ENCODE measurements at regions of chr22 and their contacts with region 1.

Region 1: GRCh38 chr22:20550821-20551744 is 43.7 kb downstream of the MED15 start:
- DNase-seq: peak in 2 of 3 donors; percentile 52 to 69
- H3K4me3 ChIP-seq: peak overlapping the region in 1 of 7 experiments; percentile 3
- H3K27ac ChIP-seq: no peak overlapping the region
- H3K4me1 ChIP-seq: peaks cover 9 to 35% (median 27%) of the 10 kb centered on the region in 4 experiments
- H3K27me3 ChIP-seq: no peaks in the 10 kb centered on the region

Region 2: DNA sequence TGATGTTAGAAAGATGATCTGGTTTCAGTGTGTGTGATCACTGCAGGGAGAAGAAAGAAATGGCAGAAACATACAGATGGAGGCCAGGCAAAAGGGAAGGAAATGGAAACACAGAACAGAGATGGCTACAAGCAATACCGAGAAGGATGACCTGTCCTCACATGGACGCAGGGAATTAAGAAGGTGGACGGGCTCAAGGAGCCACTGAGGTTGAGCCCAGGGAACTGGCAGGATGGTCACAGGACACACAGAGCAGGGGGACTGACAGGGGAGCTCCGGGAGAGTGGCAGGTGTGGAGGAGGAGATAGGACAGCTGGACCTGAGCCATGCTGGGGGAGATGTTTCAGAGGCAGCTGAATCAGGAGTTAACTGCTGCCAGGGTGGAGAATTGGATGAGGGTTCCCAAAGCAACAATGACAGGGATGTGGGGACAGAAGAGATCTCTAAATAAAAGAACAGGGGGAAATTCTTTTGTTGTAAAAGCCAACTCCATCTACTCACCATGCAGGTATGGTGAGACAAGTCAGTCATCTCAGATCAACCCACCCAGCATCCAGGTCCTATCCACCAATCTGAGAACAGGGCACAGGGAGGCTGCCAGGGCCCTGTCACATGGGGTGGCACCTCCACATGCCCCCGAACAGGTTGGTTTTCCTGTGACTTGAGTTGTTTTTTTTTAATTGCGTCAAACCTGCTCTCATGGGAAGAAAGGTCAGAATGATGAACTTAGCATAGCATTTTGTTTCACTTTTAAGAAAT is 81.8 kb before region 1 on chr22:
- CTCF ChIA-PET with region 1: no interaction called
- POLR2A ChIA-PET with region 1: no interaction called
- DNase-seq: no peak
- H3K4me3 ChIP-seq: no peak overlapping the region
- H3K27ac ChIP-seq: no peak overlapping the region
- H3K4me1 ChIP-seq: peaks cover 0 to 2% (median 2%) of the 10 kb centered on the region in 4 experiments
- H3K27me3 ChIP-seq: no peaks in the 10 kb centered on the region

Region 3: DNA sequence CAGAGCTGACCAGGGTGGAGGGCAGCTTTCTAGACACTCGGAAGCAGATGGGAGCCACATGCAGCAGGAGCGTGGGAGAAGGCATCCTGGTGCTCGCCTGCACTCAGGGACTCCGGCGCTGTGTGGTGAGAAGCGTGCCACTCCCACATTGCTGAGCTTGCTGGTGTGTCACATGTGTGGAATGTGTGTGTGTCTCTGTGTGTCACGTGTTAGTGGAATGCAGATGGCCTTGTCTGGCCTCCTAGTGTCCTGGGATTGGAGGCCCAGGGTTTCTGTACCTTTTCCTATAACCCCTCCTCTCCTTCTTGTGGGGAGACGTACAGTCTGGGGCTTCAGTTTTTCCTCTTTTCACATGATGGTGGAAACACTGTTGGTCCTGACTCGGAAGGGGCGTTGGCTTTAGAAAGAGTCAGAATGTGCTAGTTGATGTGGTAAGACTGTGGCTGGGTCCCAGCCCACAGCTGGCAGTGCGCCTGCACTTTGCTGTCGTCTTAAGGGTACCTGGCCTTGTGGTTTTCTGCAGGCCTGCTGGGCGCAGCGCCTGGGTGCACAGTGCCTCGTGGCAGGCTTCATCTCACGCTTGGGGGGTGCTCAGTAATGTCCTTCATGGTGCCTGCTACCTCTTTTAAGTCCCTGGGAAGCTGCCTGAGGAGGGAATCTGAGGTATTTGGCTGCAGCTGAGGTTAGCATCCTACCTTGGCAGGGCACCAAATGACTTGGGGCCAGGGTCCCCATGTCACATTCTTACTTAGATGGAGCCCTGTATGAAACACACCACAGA is 18.1 kb after region 1 on chr22:
- CTCF ChIA-PET with region 1: interaction called, 95 read pairs
- POLR2A ChIA-PET with region 1: no interaction called
- DNase-seq: peak; percentile 48 to 83 (median 77)
- H3K4me3 ChIP-seq: peak overlapping the region in 1 of 7 experiments; percentile 26
- H3K27ac ChIP-seq: no peak overlapping the region
- H3K4me1 ChIP-seq: peaks cover 0 to 22% (median 7%) of the 10 kb centered on the region in 4 experiments
- H3K27me3 ChIP-seq: no peaks in the 10 kb centered on the region

Region 4: DNA sequence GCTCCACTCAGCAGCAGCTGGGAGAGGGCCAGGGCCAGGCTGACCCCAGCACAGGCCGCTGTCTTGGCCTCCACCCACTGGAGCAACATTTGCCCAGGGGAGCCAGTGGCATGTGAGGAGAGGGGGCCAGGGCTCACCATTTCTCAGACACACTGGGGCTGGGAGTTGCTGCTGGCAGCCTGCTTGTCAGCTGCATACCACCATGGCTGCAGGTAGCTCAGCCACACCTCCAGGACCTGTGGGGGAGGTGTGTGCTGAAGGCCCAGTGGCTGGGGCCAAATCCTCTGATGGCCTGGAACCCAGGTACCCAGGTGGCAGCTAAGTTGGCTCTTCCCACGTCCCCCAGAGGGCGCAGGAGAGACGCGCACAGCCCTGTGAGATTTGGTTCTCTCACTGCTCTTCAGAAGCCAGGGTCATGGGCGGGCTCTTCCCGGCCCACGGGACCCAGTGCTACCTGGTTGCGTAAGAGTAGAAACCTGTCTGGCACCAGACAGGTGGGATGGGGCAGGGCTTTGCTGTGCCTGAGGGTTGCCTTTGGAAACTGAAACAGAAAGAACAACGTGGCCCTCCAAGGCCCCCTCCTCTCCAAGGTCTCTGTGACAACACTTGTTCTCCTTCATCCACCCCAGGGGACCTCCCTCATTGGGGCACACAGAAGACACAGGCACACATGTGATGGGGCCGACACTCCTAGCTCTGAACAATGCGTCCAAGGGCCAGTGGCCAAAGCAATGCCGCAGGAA is 55.1 kb after region 1 on chr22:
- CTCF ChIA-PET with region 1: no interaction called
- POLR2A ChIA-PET with region 1: no interaction called
- DNase-seq: peak; percentile 74 to 86 (median 80)
- H3K4me3 ChIP-seq: peak overlapping the region in 1 of 7 experiments; percentile 4
- H3K27ac ChIP-seq: no peak overlapping the region
- H3K4me1 ChIP-seq: peaks cover 0 to 4% (median 3%) of the 10 kb centered on the region in 4 experiments
- H3K27me3 ChIP-seq: no peaks in the 10 kb centered on the region

Region 5: GRCh38 chr22:20640999-20641892 is 90.2 kb after region 1 on chr22:
- CTCF ChIA-PET with region 1: no interaction called
- POLR2A ChIA-PET with region 1: no interaction called
- DNase-seq: no peak
- H3K4me3 ChIP-seq: no peak overlapping the region
- H3K27ac ChIP-seq: no peak overlapping the region
- H3K4me1 ChIP-seq: no peaks in the 10 kb centered on the region
- H3K27me3 ChIP-seq: peaks cover 0 to 3% (median 0%) of the 10 kb centered on the region in 5 experiments